OCI-LY7 (cell line): ENCODE measurements at regions of chr11 and their contacts with region 1.

Region 1: GRCh38 chr11:14907411-14908213 is 15.6 kb upstream of the CYP2R1 start:
- DNase-seq: peak; percentile 76
- H3K4me3 ChIP-seq: no peak overlapping the region
- H3K27ac ChIP-seq: no peak overlapping the region
- H3K4me1 ChIP-seq: peaks cover 32% of the 10 kb centered on the region
- CTCF ChIP-seq: peak; percentile 88

Region 2: GRCh38 chr11:14519917-14520746 is 387.5 kb before region 1 on chr11 and contains the start of gene PSMA1:
- CTCF ChIA-PET with region 1: no interaction called
- POLR2A ChIA-PET with region 1: no interaction called
- intact Hi-C with region 1: loop called (anchors 5 kb)
- DNase-seq: peak; percentile 94
- H3K4me3 ChIP-seq: peak within 1 kb of the TSS; percentile 94
- H3K27ac ChIP-seq: peak within 1 kb of the TSS; percentile 64
- H3K4me1 ChIP-seq: peaks cover 19% of the 10 kb centered on the region
- CTCF ChIP-seq: no peak
- total RNA-seq, gene PSMA1: 134 and 173 TPM in 2 replicates

Region 3: GRCh38 chr11:14619603-14620531 is 287.7 kb before region 1 on chr11:
- CTCF ChIA-PET with region 1: no interaction called
- POLR2A ChIA-PET with region 1: no interaction called
- intact Hi-C with region 1: loop called (anchors 10 kb)
- DNase-seq: no peak
- H3K4me3 ChIP-seq: no peak overlapping the region
- H3K27ac ChIP-seq: no peak overlapping the region
- H3K4me1 ChIP-seq: no peaks in the 10 kb centered on the region
- CTCF ChIP-seq: no peak

Region 4: DNA sequence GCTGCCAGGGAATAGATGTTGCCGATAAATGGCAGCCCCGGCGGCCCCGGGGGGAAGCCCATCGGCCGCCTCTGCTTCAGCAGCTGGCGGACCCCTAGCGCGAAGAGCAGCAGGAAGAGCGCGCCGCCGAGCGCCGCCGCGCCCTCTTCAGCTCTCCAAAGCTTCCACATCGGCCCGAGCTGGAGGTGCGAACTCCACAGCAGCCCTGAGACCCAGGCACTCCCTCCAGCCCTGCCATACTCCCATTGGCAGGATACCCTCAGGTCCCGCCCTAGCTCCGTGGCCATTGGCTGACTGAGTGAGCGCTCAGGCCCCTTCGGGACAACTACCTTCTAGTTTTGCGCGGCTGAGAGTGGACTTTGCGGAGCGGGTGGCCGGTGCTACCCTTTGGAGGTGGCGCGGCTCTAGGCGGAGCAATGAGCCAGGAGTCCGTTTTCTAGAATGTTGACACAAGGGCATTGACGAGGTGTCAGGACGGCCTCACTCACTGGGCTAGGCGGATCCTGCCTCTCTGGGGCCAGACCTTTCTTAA is 15.5 kb before region 1 on chr11 and contains the start of gene CYP2R1:
- CTCF ChIA-PET with region 1: interaction called, 29 read pairs
- POLR2A ChIA-PET with region 1: interaction called, 12 read pairs
- intact Hi-C with region 1: loop called (anchors 1 kb)
- DNase-seq: peak; percentile 97
- H3K4me3 ChIP-seq: peak within 1 kb of the TSS; percentile 69
- H3K27ac ChIP-seq: peak within 1 kb of the TSS; percentile 51
- H3K4me1 ChIP-seq: peaks cover 28% of the 10 kb centered on the region
- CTCF ChIP-seq: peak; percentile 30; the same call in 1 of the 2 replicates
- total RNA-seq, gene CYP2R1: 22.5 and 24.8 TPM in 2 replicates

Region 5: DNA sequence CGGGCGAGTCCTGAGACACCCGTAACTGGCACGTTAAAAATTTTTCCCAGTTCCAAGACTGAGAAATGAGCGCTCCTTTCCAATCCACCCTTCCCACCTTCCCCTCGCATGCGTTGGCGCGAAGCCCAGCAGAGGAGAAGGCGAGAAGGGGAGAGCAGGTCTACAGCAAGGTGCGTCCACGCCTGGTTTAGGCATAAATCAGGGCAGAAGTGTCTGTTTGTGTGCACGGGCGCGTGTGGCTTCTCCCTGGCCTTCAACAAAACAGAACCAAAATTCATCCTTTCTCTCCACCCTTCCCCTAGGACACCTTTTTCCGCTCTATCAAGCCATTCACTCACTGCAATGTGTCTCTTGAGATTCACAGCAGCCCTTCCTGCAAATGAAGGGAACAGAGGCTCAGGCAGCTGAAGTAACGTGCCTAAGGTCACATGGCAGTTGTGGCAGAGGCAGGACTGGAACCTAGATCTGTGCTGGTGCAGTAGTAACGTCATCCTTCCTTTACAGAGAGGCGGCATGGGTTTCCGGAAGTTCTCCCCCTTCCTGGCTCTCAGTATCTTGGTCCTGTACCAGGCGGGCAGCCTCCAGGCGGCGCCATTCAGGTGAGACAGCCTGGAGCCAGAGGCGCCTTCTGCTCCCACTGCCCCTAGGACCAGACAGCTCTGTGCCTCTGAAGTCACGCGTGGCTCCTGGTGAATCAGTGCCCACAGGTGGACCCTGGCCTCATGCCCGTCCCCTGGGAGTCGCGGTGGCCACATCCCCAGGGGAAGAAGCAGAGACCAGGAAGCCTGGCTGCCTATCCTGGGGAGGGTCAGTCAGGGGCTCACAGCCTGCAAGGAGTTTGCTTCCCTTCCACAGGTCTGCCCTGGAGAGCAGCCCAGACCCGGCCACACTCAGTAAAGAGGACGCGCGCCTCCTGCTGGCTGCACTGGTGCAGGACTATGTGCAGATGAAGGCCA is 166.9 kb after region 1 on chr11:
- CTCF ChIA-PET with region 1: interaction called, 8 read pairs
- POLR2A ChIA-PET with region 1: no interaction called
- intact Hi-C with region 1: loop called (anchors 2 kb)
- DNase-seq: peak; percentile 59
- H3K4me3 ChIP-seq: no peak overlapping the region
- H3K27ac ChIP-seq: no peak overlapping the region
- H3K4me1 ChIP-seq: no peaks in the 10 kb centered on the region
- CTCF ChIP-seq: peak; percentile 76

Region 6: GRCh38 chr11:15208378-15209222 is 301.0 kb after region 1 on chr11:
- CTCF ChIA-PET with region 1: interaction called, 4 read pairs
- POLR2A ChIA-PET with region 1: no interaction called
- intact Hi-C with region 1: loop called (anchors 2 kb)
- DNase-seq: peak; percentile 74
- H3K4me3 ChIP-seq: no peak overlapping the region
- H3K27ac ChIP-seq: no peak overlapping the region
- H3K4me1 ChIP-seq: no peaks in the 10 kb centered on the region
- CTCF ChIP-seq: peak; percentile 87